ENCODE measurements at regions of chr5 and their contacts with region 1.

Region 1: DNA sequence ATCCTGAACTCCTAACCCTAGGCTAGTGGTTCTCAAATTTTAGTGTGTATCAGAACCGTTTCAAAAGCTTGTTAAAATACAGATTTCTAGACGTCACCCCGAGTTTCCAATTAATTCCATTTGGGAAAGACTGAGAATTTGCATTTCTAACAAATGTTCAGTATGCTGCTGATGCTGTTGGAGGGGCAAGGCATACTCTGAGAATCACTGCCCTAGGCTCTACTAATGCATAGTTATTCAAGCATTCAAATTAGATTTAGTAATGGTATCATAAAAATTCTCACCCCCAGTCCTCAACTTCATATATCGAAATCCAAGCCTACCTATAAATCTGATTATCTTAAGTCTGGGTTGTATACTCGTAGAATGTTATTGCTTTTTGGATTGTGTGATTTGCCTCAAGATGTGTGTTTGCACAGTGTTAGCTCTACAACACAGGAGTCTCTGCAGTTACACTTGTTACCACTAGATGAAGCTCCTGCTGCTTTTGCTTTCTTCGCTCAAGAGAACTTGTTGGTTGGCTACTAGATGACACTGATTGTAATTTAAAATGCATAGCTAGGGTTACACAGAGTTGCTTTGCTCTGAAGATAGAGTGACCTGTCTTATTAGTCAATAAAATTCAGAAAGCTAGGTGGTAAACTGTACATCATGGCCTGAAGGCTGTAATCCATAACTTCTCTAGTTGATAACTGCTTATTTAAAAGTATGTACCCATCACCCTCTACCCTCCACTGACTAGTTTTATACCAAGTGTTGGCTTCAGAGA is 7.5 kb upstream of the ERAP2 start:
- DNase-seq: peak in 11 of 35 experiments; percentile 13 to 76 (median 22)
- ATAC-seq: peak; percentile 95 to 97 (median 96)
- H3K4me3 ChIP-seq: no peak overlapping the region
- H3K4me3 Mint-ChIP-seq: no peak overlapping the region
- H3K27ac ChIP-seq: no peak overlapping the region
- H3K27ac Mint-ChIP-seq: peak overlapping the region; percentile 20 to 62
- H3K4me1 ChIP-seq: peaks cover 11 to 19% of the 10 kb centered on the region in 2 experiments
- H3K4me1 Mint-ChIP-seq: peaks cover 46 to 48% (median 47%) of the 10 kb centered on the region in 3 donors
- H3K27me3 ChIP-seq: no peaks in the 10 kb centered on the region
- H3K27me3 Mint-ChIP-seq: no peaks in the 10 kb centered on the region

Region 2: GRCh38 chr5:96657087-96657665 is 211.6 kb before region 1 on chr5:
- CTCF ChIA-PET with region 1: no interaction called
- POLR2A ChIA-PET with region 1: no interaction called
- DNase-seq: peak in 27 of 35 experiments; percentile 0 to 62 (median 20)
- ATAC-seq: peak in 2 of 4 experiments; percentile 13 to 51
- H3K4me3 ChIP-seq: no peak overlapping the region
- H3K4me3 Mint-ChIP-seq: peak overlapping the region in 2 of 3 donors; percentile 22 to 28
- H3K27ac ChIP-seq: no peak overlapping the region
- H3K27ac Mint-ChIP-seq: peak overlapping the region; percentile 49 to 51
- H3K4me1 ChIP-seq: peaks cover 0 to 21% of the 10 kb centered on the region in 2 experiments
- H3K4me1 Mint-ChIP-seq: peaks cover 19 to 61% (median 46%) of the 10 kb centered on the region in 3 donors
- H3K27me3 ChIP-seq: peaks cover 0 to 2% of the 10 kb centered on the region in 2 experiments
- H3K27me3 Mint-ChIP-seq: peaks cover 10 to 13% of the 10 kb centered on the region in 2 donors

Region 3: DNA sequence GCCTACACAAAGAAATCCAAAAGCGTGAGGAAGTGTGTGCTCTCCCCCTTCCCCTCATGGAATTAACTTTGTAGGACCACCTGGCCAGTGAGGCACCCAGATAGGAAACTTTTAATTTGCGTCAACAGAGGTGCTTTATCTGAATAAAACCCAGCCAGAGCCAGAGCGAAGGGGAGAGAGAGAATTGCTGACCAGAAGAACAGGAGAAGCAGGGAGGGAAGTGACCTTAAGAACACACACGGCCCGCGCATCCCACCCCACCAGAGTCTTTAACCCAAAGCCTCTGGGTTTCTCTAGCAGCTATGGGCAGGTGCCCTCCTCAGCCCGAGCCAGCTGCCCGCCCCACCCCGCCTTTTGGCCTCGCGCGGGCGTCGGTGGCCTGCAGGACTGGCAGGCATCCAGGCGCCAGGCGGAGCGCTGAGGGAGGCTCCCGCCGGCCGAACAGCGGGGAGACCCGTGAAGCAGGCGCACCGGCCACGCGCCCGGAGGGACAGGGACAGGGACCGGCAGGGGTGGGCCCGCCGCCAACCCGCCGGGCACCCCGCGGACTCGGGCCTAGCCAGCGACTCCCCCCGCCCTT is 61.6 kb before region 1 on chr5:
- CTCF ChIA-PET with region 1: interaction called, 3 to 11 read pairs
- POLR2A ChIA-PET with region 1: interaction called, 5 to 13 read pairs
- DNase-seq: peak in 7 of 35 experiments; percentile 1 to 52 (median 18)
- ATAC-seq: peak in 3 of 4 experiments; percentile 11 to 28 (median 22)
- H3K4me3 ChIP-seq: peak overlapping the region; percentile 86 to 89
- H3K4me3 Mint-ChIP-seq: peak overlapping the region; percentile 93 to 95 (median 95)
- H3K27ac ChIP-seq: peak overlapping the region; percentile 96
- H3K27ac Mint-ChIP-seq: peak overlapping the region; percentile 97 to 99
- H3K4me1 ChIP-seq: peaks cover 33 to 48% of the 10 kb centered on the region in 2 experiments
- H3K4me1 Mint-ChIP-seq: peaks cover 80 to 89% (median 81%) of the 10 kb centered on the region in 3 donors
- H3K27me3 ChIP-seq: no peaks in the 10 kb centered on the region
- H3K27me3 Mint-ChIP-seq: no peaks in the 10 kb centered on the region

Region 4: GRCh38 chr5:96885518-96886338 is 16.9 kb after region 1 on chr5:
- CTCF ChIA-PET with region 1: interaction called, 13 to 15 read pairs
- POLR2A ChIA-PET with region 1: no interaction called
- DNase-seq: peak in 22 of 35 experiments; percentile 16 to 68 (median 34)
- ATAC-seq: peak; percentile 80 to 93 (median 90)
- H3K4me3 ChIP-seq: peak overlapping the region in 1 of 2 donors; percentile 23
- H3K4me3 Mint-ChIP-seq: peak overlapping the region; percentile 55 to 66 (median 55)
- H3K27ac ChIP-seq: peak overlapping the region; percentile 72
- H3K27ac Mint-ChIP-seq: peak overlapping the region; percentile 95 to 98
- H3K4me1 ChIP-seq: peaks cover 51 to 52% of the 10 kb centered on the region in 2 experiments
- H3K4me1 Mint-ChIP-seq: peaks cover 63 to 70% (median 69%) of the 10 kb centered on the region in 3 donors
- H3K27me3 ChIP-seq: no peaks in the 10 kb centered on the region
- H3K27me3 Mint-ChIP-seq: no peaks in the 10 kb centered on the region

Region 5: GRCh38 chr5:96934708-96935558 is 66.1 kb after region 1 on chr5:
- CTCF ChIA-PET with region 1: interaction called, 13 to 16 read pairs
- POLR2A ChIA-PET with region 1: interaction called in 1 of 2 experiments, 3 read pairs
- DNase-seq: peak; percentile 90 to 98 (median 94)
- ATAC-seq: peak; percentile 73 to 78 (median 76)
- H3K4me3 ChIP-seq: peak overlapping the region; percentile 94 to 98
- H3K4me3 Mint-ChIP-seq: peak overlapping the region; percentile 89 to 94 (median 90)
- H3K27ac ChIP-seq: peak overlapping the region; percentile 94
- H3K27ac Mint-ChIP-seq: peak overlapping the region; percentile 96 to 100
- H3K4me1 ChIP-seq: peaks cover 21 to 53% of the 10 kb centered on the region in 2 experiments
- H3K4me1 Mint-ChIP-seq: peaks cover 70 to 72% (median 71%) of the 10 kb centered on the region in 3 donors
- H3K27me3 ChIP-seq: no peaks in the 10 kb centered on the region
- H3K27me3 Mint-ChIP-seq: no peaks in the 10 kb centered on the region

Region 6: DNA sequence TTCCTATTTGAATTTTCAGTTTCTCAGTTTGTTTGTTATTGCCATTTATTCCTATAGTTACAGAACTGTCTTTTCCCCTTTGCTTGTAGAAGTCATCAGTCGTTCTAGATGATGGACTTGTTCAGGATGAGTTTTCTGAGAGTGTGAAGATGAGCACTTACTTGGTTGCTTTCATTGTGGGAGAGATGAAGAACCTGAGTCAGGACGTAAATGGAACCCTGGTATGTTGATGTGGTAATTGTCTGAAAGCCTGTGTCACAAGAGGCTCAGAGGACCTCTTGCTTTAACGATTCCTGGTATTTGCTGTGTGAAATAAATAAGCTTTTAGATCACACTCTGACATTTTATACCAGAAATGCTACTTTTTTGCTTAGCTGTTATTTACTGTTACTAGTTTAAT is 117.7 kb after region 1 on chr5:
- CTCF ChIA-PET with region 1: interaction called, 3 to 11 read pairs
- POLR2A ChIA-PET with region 1: interaction called in 1 of 2 experiments, 4 read pairs
- DNase-seq: no peak
- ATAC-seq: no peak
- H3K4me3 ChIP-seq: no peak overlapping the region
- H3K4me3 Mint-ChIP-seq: no peak overlapping the region
- H3K27ac ChIP-seq: no peak overlapping the region
- H3K27ac Mint-ChIP-seq: peak overlapping the region; percentile 23 to 33
- H3K4me1 ChIP-seq: peaks cover 0 to 3% of the 10 kb centered on the region in 2 experiments
- H3K4me1 Mint-ChIP-seq: peaks cover 65 to 75% (median 72%) of the 10 kb centered on the region in 3 donors
- H3K27me3 ChIP-seq: no peaks in the 10 kb centered on the region
- H3K27me3 Mint-ChIP-seq: no peaks in the 10 kb centered on the region

Region 7: DNA sequence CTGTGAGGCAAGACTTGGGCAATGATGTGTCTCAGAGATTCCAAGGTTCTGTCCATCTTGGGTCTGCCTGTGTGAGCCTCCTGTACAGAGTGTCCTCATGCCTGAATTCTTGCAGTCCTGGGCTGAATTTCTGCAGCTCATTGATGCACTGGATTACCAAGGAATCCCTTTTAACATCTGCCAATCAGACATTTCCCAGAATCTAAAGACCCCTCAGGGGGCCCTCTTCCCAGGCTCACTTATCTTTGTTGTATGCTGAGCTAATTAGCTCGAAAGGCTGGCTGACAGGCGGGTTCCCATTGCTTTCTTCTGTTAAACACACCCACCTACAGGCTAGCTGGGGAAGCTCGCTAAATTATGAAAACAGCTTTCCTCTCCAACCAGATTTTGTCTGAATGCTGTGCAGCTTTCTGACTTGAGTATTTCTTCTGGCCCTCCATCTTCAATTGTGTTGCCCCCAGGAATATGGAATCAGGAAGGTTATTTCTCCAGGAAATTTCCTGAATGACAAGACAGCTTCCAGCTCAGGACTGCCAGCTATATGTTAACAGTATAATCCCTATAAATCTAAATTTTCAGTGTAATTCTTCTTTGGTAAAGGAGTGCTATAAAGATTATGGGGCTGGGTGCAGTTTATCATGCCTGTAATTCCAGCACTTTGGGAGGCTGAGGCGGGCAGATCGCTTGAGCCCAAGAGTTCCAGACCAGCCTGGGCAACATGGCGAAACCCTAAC is 273.9 kb after region 1 on chr5 and contains the start of gene LIX1:
- CTCF ChIA-PET with region 1: interaction called, 3 to 17 read pairs
- POLR2A ChIA-PET with region 1: interaction called in 1 of 2 experiments, 3 read pairs
- DNase-seq: peak in 14 of 35 experiments; percentile 1 to 44 (median 12)
- ATAC-seq: peak; percentile 52 to 73 (median 58)
- H3K4me3 ChIP-seq: no peak within 1 kb of the TSS
- H3K4me3 Mint-ChIP-seq: no peak within 1 kb of the TSS
- H3K27ac ChIP-seq: no peak within 1 kb of the TSS
- H3K27ac Mint-ChIP-seq: no peak within 1 kb of the TSS
- H3K4me1 ChIP-seq: no peaks in the 10 kb centered on the region
- H3K4me1 Mint-ChIP-seq: no peaks in the 10 kb centered on the region
- H3K27me3 ChIP-seq: peaks cover 0 to 3% of the 10 kb centered on the region in 2 experiments
- H3K27me3 Mint-ChIP-seq: peaks cover 11 to 13% of the 10 kb centered on the region in 2 donors
- total RNA-seq, gene LIX1: not detected